ENCODE measurements at regions of chr1 and their contacts with region 1.

Region 1: GRCh38 chr1:17502326-17502778 is 37.1 kb upstream of the ARHGEF10L start:
- DNase-seq: peak; percentile 66 to 97 (median 86)

Region 2: GRCh38 chr1:17606826-17607440 is 104.6 kb after region 1 on chr1:
- intact Hi-C with region 1: loop called (anchors 1 kb)
- DNase-seq: peak; percentile 49 to 95 (median 80)

Region 3: GRCh38 chr1:17719874-17720273 is 217.5 kb after region 1 on chr1:
- intact Hi-C with region 1: no loop called
- DNase-seq: no peak

Measured in posterior cingulate gyrus (tissue), 11 donors.